ENCODE measurements at regions of chr10 and their contacts with region 1.

Region 1: DNA sequence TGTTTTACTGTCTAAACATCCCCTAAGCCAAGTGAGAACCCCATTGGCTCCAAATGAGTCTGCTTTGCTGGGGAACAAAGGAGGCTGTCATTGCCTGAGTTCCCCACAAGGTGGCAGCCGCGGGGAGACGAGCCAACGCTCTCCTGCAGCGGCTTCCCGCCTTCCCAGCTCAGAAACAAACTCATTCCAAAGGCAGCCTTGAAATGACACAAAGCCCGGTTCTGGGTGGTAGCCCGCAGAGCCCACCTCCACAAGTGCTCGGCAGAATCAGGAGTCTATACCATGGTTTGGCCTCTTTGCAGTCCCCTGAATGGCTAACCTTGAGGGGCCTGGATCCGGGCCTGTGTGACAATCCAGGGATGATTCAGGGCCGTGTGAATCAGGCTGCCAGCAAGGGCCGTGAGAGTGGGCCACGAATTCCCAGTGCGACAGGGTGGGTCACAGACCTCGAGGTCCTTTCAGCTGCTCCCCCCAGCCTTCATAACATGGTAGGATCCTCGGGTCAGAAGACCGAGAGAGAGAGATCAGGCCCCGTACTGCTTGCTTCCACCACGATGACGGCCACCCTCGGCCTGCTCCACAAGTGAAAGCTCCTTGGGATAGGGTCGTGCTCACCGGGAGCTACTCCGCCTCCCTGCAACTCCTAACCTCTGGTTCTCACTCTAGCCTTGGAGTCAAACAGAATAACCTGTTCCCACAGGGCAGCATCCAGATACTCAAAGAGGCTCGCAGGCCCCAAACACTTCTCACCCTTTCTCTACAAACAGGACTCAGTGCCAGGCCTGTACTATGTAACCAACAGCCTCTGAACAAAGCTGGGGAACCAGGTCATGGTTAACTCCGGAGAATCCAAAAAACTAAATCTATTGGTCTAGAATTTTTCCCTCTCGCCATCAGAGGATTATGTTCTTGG is 79.6 kb downstream of the DLG5 start:
- DNase-seq: peak; percentile 60 to 95 (median 89)

Region 2: DNA sequence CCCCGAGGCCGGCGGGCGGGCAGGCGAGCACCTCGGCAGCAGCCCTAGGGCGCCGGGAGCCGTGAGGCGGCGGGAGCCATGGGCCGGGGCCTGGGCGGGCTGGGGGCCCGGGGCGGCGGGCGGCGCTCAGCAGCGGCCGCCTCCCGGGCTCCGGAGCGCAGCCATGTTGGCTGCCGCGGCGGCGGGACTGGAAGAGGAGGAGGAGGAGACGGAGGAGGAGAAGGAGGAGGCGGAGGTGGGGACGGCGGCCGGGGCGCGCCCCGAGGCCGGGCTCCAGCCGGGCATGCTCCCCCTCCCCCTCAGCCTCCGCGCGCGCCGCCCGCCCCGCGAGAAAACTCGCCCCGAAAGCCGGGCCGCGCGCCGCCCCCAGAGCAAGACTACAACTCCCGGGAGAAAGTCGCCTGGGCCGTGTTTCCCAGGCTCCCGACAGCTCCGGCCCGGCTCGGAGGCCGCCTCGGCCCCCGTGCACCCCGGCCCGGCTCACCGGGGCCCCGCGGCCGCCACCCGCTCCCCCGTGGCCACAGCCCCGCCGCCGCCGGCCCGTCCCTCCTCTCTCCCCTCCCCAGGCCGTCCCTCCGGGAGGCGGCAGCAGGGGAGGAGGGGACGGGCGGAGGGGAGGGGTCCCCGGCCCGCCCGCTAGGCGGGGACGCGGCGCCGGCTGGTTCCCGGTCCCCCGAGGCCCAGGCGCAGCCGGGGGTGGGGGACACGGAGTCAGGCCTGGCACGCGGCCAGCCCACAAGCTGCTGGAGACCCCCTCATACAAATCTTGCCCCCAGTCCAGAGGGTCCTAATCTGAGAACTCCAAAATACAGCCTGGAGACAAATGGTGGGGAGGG is 79.8 kb after region 1 on chr10 and contains the start of gene DLG5:
- intact Hi-C with region 1: loop called (anchors 5 kb)
- DNase-seq: peak in 41 of 42 donors; percentile 4 to 85 (median 64)

Region 3: DNA sequence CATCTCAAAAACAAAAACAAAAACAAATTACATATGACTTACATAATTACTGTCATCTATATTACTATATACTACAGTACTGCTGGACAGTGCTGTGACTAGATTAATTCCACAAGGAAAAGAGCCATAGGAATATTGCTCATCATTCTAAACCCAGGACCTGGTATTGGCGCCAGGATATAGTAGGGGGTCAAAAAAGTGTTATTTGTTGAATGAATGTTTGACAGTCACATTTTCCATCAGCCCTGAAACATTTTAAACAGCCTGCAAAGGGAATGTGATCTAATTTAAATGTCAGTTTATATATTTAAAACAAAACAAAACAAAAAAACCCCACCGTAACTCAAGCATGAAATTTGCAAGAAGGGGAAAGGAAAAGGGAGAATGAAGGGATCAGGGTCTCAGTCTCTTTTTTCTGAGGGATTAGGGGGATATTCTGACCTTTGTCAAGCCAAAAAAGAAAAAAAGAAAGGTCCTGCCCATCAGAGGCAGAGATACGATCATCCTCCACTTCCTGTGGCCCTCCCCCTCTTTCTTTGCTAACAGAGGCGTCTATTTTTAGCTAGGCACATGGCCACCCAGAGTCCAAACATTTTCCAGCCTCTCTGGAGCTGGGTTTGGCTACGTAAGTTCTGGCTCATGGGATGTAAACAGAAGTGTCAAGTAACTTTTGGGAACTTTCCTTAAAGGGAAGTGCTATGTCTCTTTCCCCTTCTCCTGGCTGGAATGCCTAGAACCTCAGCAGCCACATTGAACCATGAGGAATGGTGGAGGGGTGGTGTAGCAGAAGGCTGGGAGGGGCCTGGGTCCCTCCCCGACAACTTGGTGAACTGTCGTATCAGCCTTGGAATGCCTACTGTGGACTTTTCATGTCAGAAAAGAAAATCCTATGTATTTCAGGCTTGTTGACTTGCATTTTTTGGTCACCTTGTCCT is 124.2 kb after region 1 on chr10:
- intact Hi-C with region 1: loop called (anchors 5 kb)
- DNase-seq: no peak

Region 4: GRCh38 chr10:78029269-78030226 is 182.6 kb after region 1 on chr10 and contains the start of gene POLR3A:
- intact Hi-C with region 1: loop called (anchors 10 kb)
- DNase-seq: peak; percentile 74 to 96 (median 91)

Measured in head of caudate nucleus (tissue), 42 donors.